HAP-1 (cell line): ENCODE measurements at regions of chr5 and their contacts with region 1.

Region 1: DNA sequence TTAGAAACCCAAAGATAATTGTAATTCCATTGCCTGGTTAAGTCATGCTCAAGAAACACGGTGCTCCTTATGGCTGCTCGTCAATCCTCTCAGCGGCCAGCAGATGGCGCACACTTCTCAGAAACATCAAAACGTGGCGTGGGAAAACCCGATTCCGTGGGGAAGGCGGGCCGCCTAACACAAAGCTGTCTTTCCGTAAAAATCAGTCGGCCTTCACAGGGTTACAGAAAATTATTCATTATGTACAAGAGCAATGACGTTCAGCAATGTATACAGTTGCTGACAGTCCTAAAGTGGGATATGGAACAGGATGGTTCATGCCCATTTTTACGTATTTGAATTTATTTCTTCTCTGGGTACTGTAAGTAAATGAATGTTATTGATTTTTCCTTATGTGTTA is 83.5 kb downstream of the PDE4D start:
- DNase-seq: peak; percentile 44 to 77
- H3K4me3 ChIP-seq: no peak overlapping the region
- H3K4me1 ChIP-seq: no peaks in the 10 kb centered on the region
- H3K27me3 ChIP-seq: no peaks in the 10 kb centered on the region

Region 2: DNA sequence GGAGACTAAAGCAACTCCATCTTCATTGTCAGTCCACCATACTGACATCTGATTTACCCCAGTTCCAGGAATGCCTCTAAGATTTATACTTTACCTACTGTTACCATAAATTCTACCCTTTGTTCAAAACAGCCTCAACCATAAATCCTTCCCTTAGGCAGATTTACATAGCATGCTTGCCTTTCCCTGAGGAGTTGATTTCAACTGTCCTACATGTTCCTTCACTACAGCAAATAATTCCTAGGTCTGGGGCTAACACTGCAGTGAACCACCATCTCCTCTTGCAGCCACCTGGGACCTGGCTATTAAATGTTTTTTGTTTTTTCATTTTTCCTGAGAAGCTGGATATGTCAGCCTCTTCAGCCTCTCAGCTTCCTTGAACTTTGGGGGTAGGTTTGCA is 250.3 kb after region 1 on chr5:
- in situ Hi-C with region 1: no loop called
- DNase-seq: no peak
- H3K4me3 ChIP-seq: no peak overlapping the region
- H3K4me1 ChIP-seq: no peaks in the 10 kb centered on the region
- H3K27me3 ChIP-seq: no peaks in the 10 kb centered on the region

Region 3: GRCh38 chr5:60287174-60287771 is 477.2 kb after region 1 on chr5:
- in situ Hi-C with region 1: loop called (anchors 25 kb)
- DNase-seq: peak; percentile 61 to 73
- H3K4me3 ChIP-seq: no peak overlapping the region
- H3K4me1 ChIP-seq: no peaks in the 10 kb centered on the region
- H3K27me3 ChIP-seq: no peaks in the 10 kb centered on the region

Region 4: GRCh38 chr5:60382716-60383115 is 572.7 kb after region 1 on chr5:
- in situ Hi-C with region 1: loop called (anchors 25 kb)
- DNase-seq: peak in 1 of 2 experiments; percentile 2
- H3K4me3 ChIP-seq: no peak overlapping the region
- H3K4me1 ChIP-seq: no peaks in the 10 kb centered on the region
- H3K27me3 ChIP-seq: no peaks in the 10 kb centered on the region

Region 5: GRCh38 chr5:60668686-60669304 is 858.8 kb after region 1 on chr5:
- in situ Hi-C with region 1: loop called (anchors 25 kb)
- DNase-seq: peak in 1 of 2 experiments; percentile 33
- H3K4me3 ChIP-seq: no peak overlapping the region
- H3K4me1 ChIP-seq: no peaks in the 10 kb centered on the region
- H3K27me3 ChIP-seq: no peaks in the 10 kb centered on the region